ENCODE measurements at regions of chr2 and their contacts with region 1.

Region 1: GRCh38 chr2:162196638-162197037 is 44.6 kb upstream of the GCG start:
- DNase-seq: no peak
- H3K4me3 ChIP-seq: no peak overlapping the region
- CTCF ChIP-seq: no peak

Region 2: DNA sequence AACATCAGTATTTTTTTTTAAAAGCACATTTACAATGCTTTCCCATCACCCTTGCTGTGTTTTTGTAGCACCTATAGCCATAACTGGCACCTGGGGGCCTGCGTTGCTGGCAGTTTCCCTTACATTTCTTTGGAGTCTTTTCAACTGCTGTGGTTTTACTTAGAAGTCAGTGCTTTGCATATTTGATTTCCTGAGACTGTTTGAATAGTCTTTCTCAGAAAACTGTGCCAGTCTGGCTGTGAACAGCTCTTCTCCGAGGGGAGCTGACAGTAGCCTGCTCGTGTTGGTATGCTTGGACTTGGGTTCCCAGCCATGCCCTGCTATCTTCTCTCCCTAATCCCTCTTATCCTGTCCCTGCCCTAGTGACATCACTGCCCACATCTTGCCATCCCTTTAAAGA is 204.1 kb before region 1 on chr2:
- CTCF ChIA-PET with region 1: no interaction called
- POLR2A ChIA-PET with region 1: no interaction called
- DNase-seq: no peak
- H3K4me3 ChIP-seq: no peak overlapping the region
- CTCF ChIP-seq: no peak

Region 3: DNA sequence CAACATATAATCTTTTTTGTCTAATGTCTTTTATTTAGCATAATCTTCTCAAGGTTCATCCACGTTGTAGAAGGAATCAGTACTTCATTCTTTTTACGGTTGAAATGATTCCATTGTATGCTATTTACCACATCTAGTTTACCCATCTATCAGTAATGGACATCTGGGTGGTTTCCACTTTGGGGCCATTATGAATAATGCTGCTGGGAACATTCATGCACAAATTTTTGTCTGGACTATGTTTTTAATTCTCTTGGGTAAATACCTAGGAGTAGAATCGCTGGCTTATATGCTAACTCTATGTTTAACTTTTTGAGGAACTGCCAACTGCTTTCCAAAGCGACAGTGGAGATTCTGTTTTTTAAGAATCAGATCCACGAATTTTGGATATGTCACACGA is 37.2 kb before region 1 on chr2:
- CTCF ChIA-PET with region 1: no interaction called
- POLR2A ChIA-PET with region 1: no interaction called
- DNase-seq: no peak
- H3K4me3 ChIP-seq: no peak overlapping the region
- CTCF ChIP-seq: no peak

Region 4: GRCh38 chr2:162184821-162185446 is 11.7 kb before region 1 on chr2:
- CTCF ChIA-PET with region 1: interaction called, 17 read pairs
- POLR2A ChIA-PET with region 1: interaction called, 3 read pairs
- DNase-seq: no peak
- H3K4me3 ChIP-seq: no peak overlapping the region
- CTCF ChIP-seq: no peak

Region 5: GRCh38 chr2:162232671-162233070 is 36.0 kb after region 1 on chr2:
- CTCF ChIA-PET with region 1: no interaction called
- POLR2A ChIA-PET with region 1: no interaction called
- DNase-seq: no peak
- H3K4me3 ChIP-seq: no peak overlapping the region
- CTCF ChIP-seq: no peak

Region 6: DNA sequence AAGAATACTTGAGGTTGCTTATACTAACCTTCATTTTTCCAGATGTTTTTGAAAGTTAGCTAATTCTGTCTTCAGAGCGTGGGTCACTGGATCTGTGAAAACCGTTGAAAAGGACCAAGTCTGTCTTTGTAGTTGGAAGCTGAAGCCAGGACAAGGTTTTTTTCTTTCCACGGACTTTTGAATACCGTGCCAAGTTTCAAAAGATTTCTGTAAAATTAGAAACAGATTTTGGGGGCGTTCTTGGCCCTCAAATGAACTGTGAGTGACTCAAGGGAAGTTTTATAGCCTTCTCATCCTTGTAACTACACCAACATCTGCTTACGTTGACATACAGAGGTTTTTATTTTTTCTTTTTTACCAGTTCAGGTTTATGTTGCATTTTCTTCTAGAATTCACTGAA is 46.7 kb after region 1 on chr2 and contains the start of gene FAP:
- CTCF ChIA-PET with region 1: interaction called, 3 read pairs
- POLR2A ChIA-PET with region 1: interaction called, 11 read pairs
- DNase-seq: peak; percentile 87
- H3K4me3 ChIP-seq: peak within 1 kb of the TSS; percentile 64
- CTCF ChIP-seq: no peak